ENCODE measurements at regions of chr1 and their contacts with region 1.

Region 1: DNA sequence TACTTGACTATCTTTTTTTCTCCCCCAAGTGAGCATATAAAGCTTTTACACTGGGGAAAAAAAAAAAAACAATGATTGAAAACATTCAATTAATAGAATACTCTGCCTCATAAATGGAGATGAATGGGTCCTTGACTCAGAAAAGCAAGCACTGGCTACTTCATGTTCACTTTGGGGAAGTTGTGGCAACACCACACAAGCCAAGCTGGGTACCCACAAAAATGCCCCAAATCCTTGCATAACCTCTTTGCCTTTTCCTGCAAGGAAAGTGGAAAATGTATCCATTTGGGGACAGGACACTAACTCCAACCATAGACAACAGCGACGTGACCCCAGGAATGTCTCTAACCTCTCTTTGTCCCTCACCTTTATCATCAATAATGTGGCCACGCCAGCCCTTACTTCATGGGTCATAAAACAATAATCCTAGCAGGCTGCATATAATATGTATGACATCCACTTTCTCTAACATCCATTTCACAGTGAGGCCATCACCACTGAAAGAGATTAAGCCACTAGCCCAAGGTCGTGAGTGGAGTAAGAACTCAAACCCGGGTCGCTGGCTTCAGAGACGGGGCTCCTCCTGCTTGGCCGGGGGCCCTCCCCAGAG is 2.3 kb downstream of the ECE1 start:
- DNase-seq: no peak
- H3K4me3 ChIP-seq: no peak overlapping the region
- H3K27me3 ChIP-seq: no peaks in the 10 kb centered on the region
- CTCF ChIP-seq: no peak

Region 2: DNA sequence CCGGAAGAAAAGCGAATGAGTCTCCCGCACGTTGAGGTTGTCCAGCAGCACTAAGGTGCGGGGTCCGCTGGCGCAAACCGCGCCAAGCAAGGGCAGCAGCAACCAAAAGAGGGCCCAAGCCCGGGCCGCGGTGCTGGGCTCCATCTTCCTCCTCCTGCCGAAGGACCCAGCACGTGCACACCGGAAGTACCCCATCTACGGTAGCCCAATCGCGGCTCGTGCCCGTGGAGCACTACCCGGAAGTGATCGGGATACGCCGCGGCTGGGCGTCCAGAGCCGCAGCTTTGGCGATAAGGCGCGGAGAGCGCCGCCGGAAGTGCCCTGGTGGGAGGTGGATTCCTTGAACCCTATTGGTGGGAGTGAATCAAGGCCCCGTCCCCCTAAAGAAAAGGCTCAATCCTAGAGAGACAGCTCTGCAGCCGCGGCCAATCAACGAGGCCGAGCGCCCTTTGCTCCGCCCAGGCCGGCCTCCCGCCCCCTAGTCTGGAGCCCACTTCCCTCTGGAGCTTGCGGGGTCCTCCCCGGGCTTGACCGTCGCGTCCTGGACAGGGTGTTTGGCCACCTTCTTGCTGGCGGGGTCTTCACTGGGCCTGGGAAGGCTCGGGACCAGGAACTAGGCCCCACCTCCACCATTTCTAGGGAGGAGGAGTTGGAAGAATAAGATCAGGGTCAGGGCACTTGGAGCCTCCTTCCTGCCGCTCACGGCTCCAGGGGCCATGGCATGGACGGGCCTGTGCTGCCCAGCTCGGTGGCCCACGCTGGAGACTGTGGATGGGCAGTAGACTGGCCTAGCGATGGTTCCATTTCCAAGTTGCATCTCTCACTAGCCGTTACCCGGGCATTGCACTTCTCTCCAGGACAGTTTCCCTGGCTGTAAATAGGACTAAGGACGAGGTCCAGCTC is 626.6 kb before region 1 on chr1 and contains the start of gene DDOST:
- CTCF ChIA-PET with region 1: no interaction called
- POLR2A ChIA-PET with region 1: interaction called, 19 read pairs
- DNase-seq: peak; percentile 92
- H3K4me3 ChIP-seq: peak within 1 kb of the TSS; percentile 91
- H3K27me3 ChIP-seq: no peaks in the 10 kb centered on the region
- CTCF ChIP-seq: peak; percentile 71
- polyA plus RNA-seq, gene DDOST: 581 and 587 TPM in 2 replicates

Measured in BJ (cell line).